ENCODE measurements at regions of chr7 and their contacts with region 1.

Region 1: DNA sequence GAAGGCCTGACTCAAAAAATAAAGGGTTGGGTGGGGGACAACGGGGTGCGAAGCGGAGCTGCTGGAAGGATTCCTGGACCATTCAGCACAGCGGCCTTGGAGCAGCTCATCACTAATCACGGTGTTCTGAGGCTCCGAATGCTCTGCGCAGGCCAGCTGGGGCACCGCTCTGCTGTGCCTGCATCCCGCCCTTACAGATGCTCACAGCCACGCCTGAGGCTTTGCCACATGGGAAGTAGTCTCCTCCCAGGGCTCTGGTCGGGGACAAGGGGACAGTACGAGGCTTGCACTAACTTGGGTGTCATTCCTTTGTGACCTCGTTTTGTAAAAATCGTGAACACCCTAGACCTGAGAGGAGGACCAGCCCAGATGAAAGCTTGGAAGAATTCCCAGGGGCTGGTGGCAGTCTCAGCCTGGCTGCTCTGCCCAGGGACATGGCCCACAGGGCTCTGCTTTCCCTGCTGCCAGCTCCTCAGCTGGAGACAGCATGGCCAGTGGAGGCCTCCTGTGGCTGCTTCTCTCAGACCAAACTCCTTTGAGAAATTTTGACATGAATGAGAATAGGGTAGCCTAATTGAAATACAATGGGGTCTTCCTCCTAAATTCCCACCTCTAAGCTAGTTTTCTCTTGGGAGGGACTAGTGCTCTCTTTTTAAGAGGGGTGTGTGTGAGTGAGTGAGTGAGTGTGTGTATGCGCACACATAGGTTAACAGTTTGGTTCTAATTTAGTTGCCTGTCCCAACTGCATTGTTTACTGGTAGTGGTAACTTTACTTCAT is 140.2 kb upstream of the EFCAB10 start:
- DNase-seq: no peak
- H3K4me3 ChIP-seq: no peak overlapping the region
- CTCF ChIP-seq: no peak
- POLR2A ChIP-seq: no peak

Region 2: DNA sequence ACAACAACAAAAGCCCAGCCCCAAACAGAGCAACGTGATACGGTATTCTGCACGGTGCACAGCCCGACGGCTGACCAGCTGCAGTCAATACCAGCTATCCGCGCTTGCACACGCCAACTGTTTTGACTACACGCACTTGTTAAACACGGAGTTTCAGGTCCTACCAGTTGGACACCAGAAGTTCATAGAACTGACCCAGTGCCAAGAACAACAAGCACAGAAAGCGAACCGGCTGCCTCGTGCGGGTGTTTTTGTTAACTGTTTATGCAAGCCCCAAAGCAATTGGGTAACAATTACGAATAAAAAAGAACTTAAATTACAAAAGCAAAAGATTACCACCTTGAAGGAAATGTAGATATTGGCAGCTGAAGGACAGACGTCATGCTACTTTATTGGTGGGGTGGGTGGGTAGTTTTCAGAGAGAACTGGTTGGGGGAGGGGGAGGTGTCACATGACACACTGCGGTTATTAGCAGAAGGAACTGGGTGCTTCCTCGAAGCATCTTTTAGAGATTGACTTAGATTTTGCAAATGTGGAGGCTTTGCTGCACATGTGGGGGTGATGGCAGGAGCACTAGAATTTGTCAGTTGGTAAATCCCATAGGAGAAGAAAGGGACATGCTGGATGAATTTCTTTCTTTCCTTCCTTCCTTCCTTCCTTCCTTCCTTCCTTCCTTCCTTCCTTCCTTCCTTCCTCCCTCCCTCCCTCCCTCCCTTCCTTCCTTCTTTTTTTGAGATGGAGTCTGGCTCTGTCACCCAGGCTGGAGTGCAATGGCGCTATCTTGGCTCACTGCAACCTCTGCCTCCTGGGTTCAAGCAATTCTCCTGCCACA is 29.6 kb before region 1 on chr7:
- intact Hi-C with region 1: no loop called
- DNase-seq: peak; percentile 69 to 91
- H3K4me3 ChIP-seq: no peak overlapping the region
- CTCF ChIP-seq: no peak
- POLR2A ChIP-seq: no peak

Region 3: GRCh38 chr7:105741982-105742480 is 20.5 kb after region 1 on chr7:
- intact Hi-C with region 1: loop called (anchors 1 kb)
- DNase-seq: no peak
- H3K4me3 ChIP-seq: no peak overlapping the region
- CTCF ChIP-seq: no peak
- POLR2A ChIP-seq: no peak

Region 4: DNA sequence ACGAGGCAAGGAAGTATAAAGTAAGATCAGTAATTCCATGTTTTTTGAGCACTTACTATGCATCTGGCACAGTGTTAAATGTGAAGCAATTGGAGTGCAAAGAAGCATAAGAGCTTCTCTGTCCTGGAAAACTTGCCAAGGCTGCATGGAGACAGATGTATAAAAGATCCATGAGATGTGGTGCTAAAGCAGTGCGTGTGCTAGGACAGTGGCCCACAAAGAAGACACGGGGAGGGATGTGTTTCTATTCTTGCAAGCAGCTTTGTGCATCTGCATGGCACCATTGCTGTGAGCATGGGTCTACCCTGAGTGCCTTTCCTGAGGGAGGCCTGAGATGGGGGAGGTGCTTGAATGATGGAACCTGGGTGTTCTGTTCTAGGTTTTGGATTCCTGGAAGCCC is 236.5 kb after region 1 on chr7:
- intact Hi-C with region 1: no loop called
- DNase-seq: no peak
- H3K4me3 ChIP-seq: no peak overlapping the region
- CTCF ChIP-seq: no peak
- POLR2A ChIP-seq: no peak